AG04450 (cell line): ENCODE measurements at regions of chr1 and their contacts with region 1.

Region 1: DNA sequence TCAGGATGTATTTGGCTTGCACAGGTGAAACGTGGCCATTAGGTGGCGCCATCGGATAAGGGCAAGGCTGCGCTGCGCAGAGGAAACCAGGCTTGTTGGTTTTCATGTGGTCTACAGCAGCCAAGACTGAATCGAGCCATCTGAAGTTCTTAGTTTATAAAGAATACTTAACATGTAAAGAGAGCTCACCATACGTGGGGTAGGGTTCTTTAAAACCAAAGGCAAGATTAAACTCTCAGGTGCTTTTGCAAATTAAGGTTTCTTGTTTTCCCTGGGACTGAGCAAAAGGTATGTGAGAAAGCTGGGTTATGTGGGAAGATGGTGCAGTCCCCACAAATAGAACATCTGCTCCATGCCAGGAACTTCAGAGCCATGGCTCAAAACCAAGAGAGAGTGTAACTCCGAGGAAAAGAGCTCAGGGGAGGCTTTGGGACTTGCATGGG is 9.3 kb downstream of the MASP2 start:
- DNase-seq: peak; percentile 77
- H3K4me3 ChIP-seq: no peak overlapping the region
- H3K27ac ChIP-seq: no peak overlapping the region
- H3K27me3 ChIP-seq: peaks cover 5% of the 10 kb centered on the region
- CTCF ChIP-seq: peak; percentile 100

Region 2: GRCh38 chr1:10507111-10507879 is 530.5 kb before region 1 on chr1:
- CTCF ChIA-PET with region 1: interaction called, 11 read pairs
- POLR2A ChIA-PET with region 1: no interaction called
- DNase-seq: no peak
- H3K4me3 ChIP-seq: no peak overlapping the region
- H3K27ac ChIP-seq: no peak overlapping the region
- H3K27me3 ChIP-seq: no peaks in the 10 kb centered on the region
- CTCF ChIP-seq: peak; percentile 92

Region 3: DNA sequence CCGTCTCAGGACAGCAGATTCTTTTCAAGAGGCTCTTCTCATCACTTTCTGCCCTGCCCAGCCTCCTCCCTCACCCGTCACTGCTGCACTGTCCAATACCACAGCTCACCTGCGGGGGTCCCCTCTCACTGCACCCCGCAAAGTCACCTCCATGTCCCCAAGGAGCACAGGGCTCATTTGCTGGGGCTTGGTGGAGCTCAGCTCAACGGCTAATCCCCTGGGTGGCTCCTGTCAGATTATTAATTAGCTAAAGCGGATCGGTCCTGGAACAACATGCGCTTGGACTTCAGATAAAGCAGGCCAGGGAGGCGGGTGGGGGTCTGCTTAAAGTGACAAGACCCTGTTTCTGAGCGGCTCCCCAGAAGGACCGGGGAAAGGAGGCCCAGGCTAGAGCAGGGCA is 284.5 kb before region 1 on chr1:
- CTCF ChIA-PET with region 1: no interaction called
- POLR2A ChIA-PET with region 1: no interaction called
- DNase-seq: no peak
- H3K4me3 ChIP-seq: no peak overlapping the region
- H3K27ac ChIP-seq: no peak overlapping the region
- H3K27me3 ChIP-seq: peaks cover 39% of the 10 kb centered on the region
- CTCF ChIP-seq: no peak

Region 4: DNA sequence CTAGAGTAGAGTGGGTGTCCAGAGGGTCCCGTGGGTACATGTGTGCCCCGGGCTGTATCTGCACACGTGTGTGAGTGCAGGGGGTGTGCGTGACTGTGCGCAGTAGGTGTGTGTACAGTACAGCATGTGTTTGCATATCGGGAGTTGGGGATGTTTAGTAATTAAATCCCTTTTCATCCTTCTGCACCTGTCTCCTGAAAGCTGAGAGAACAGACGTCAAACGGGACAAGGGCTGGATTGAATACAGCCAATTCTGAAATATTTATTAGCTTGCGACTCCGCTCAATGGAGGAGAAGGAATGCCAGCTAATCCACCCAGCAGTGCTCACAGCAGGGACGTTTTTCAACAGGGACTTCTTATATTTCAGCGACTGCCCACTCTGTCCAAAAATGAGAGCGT is 196.6 kb before region 1 on chr1:
- CTCF ChIA-PET with region 1: no interaction called
- POLR2A ChIA-PET with region 1: no interaction called
- DNase-seq: no peak
- H3K4me3 ChIP-seq: no peak overlapping the region
- H3K27ac ChIP-seq: no peak overlapping the region
- H3K27me3 ChIP-seq: peaks cover 24% of the 10 kb centered on the region
- CTCF ChIP-seq: no peak

Region 5: GRCh38 chr1:11000526-11000925 is 37.2 kb before region 1 on chr1:
- CTCF ChIA-PET with region 1: no interaction called
- POLR2A ChIA-PET with region 1: no interaction called
- DNase-seq: no peak
- H3K4me3 ChIP-seq: no peak overlapping the region
- H3K27ac ChIP-seq: no peak overlapping the region
- H3K27me3 ChIP-seq: peaks cover 5% of the 10 kb centered on the region
- CTCF ChIP-seq: no peak

Region 6: DNA sequence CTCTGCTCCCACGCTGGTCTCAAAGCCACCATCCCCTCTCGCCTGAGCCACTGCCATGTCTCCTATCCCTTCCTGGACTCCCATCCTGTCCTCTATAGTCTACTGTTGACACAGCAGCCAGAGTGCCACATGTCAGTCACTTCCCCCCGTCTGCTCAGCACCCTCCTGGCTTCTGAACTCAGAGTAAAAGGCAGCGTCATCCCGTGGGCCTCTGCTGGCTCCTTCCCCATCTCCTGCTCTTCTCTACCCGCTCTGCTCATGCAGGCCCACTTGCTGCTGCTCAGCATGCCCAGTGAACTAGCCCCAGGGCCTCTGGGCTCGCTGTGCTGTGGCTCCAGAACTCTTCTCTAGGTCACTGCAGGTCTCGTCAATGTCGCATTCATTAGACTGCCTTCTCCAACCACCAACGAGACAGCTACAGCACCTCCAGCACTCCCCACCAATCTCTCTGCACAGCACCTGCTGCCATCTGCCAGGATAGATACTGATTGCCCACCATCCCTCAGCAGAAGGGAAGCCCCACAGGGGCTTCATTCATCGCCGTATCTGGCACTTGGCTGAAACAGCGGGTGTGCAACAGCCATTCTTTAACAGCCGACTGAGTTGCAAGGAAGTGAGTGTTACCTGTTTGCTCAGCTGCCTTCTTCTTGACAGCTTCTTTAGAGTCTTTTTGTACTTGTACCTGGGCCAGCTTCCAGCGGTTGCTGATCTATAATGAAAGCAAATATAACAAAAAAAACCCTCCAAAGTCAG is 33.9 kb after region 1 on chr1:
- CTCF ChIA-PET with region 1: interaction called, 15 read pairs
- POLR2A ChIA-PET with region 1: no interaction called
- DNase-seq: no peak
- H3K4me3 ChIP-seq: no peak overlapping the region
- H3K27ac ChIP-seq: no peak overlapping the region
- H3K27me3 ChIP-seq: no peaks in the 10 kb centered on the region
- CTCF ChIP-seq: no peak

Region 7: GRCh38 chr1:11134251-11134897 is 96.6 kb after region 1 on chr1:
- CTCF ChIA-PET with region 1: interaction called, 12 read pairs
- POLR2A ChIA-PET with region 1: no interaction called
- DNase-seq: no peak
- H3K4me3 ChIP-seq: no peak overlapping the region
- H3K27ac ChIP-seq: peak overlapping the region; percentile 39
- H3K27me3 ChIP-seq: no peaks in the 10 kb centered on the region
- CTCF ChIP-seq: no peak

Region 8: DNA sequence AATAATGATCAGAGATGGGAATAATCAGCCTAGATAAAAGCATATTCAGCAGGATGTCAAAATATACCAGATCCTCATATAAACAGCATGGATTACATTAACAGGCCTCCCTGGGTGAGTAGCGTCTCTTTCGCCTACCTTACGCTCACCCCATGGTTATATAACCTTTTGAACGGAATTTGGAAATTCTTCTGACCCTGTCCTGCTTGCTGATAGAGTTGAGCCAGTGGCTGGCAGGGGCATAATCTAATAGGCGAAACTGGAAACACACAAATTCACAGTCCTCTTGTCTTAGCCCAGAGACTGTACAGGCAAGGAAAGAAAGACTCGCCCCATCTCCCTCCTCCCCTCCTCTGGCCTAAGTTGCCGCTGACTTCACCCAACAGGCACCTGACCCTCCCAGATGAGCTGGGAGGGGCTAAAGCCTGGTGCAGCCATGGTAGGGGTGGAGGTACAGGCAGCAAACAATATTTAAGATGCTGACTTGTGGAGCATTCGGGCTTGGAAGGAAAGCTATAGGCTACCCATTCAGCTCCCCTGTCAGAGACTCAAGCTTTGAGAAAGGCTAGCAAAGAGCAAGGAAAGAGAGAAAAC is 151.2 kb after region 1 on chr1 and contains the start of gene ANGPTL7:
- CTCF ChIA-PET with region 1: interaction called, 17 read pairs
- POLR2A ChIA-PET with region 1: no interaction called
- DNase-seq: no peak
- H3K4me3 ChIP-seq: no peak within 1 kb of the TSS
- H3K27ac ChIP-seq: no peak within 1 kb of the TSS
- H3K27me3 ChIP-seq: no peaks in the 10 kb centered on the region
- CTCF ChIP-seq: no peak
- polyA plus RNA-seq, gene ANGPTL7: not detected in 2 replicates

Region 9: GRCh38 chr1:11227106-11228077 is 189.6 kb after region 1 on chr1:
- CTCF ChIA-PET with region 1: interaction called, 11 read pairs
- POLR2A ChIA-PET with region 1: no interaction called
- DNase-seq: no peak
- H3K4me3 ChIP-seq: no peak overlapping the region
- H3K27ac ChIP-seq: no peak overlapping the region
- H3K27me3 ChIP-seq: no peaks in the 10 kb centered on the region
- CTCF ChIP-seq: no peak